Lower leg skin (tissue), 4 donors: ENCODE measurements at regions of chr4 and their contacts with region 1.

Region 1: GRCh38 chr4:83272900-83273299 is 11.7 kb downstream of the COQ2 start:
- DNase-seq: no peak
- H3K4me3 ChIP-seq: no peak overlapping the region
- CTCF ChIP-seq: no peak
- POLR2A ChIP-seq: no peak

Region 2: DNA sequence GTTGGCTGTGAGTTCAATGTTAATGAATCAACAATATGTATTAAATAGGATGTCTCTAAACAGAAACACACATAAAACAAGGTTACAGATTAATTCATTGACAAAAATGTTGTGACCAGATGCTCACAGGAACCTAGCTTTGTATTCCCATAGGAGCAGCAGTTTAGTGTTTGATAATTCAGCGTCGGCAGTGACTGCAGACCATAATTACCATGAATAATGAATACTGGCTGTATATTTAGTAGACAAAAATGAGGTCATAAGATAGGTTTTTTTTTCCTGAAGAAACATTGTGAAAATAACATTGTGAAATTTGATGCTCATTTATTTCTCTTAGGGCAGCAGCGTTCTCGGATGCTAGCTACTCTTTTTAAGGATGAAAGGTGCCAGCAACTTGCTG is 210.2 kb before region 1 on chr4:
- intact Hi-C with region 1: loop called (anchors 5 kb)
- DNase-seq: no peak
- H3K4me3 ChIP-seq: no peak overlapping the region
- CTCF ChIP-seq: no peak
- POLR2A ChIP-seq: no peak